Common myeloid progenitor, CD34-positive (primary cell): ENCODE measurements at regions of chr19 and their contacts with region 1.

Region 1: DNA sequence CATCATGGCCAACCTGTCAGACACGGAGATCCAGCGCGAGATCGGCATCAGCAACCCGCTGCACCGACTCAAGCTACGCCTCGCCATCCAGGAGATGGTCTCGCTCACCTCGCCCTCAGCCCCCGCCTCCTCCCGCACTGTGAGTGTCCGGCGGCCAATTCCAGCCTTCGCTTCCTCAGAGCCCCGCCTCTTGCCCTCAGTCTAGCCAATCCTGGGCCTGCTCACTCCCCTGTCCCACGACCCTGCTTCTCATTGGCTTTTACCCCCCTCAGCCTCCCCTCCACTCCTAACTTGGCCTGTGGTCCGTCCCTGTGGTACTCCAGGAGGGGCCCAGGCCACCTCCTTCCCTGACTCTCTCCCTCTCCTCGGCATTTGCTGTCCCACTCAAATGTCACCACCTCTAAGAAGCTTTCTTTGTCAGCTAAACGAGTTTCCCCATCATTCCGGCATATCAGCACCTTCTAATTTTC is 12.3 kb downstream of the HRC start:
- DNase-seq: peak; percentile 84 to 88 (median 88)
- H3K4me3 ChIP-seq: peak overlapping the region; percentile 23 to 84 (median 60)
- H3K27ac ChIP-seq: no peak overlapping the region
- H3K4me1 ChIP-seq: peaks cover 0 to 19% (median 14%) of the 10 kb centered on the region in 4 experiments
- H3K27me3 ChIP-seq: peaks cover 0 to 5% (median 0%) of the 10 kb centered on the region in 5 experiments

Region 2: GRCh38 chr19:49614096-49614833 is 471.4 kb after region 1 on chr19:
- CTCF ChIA-PET with region 1: no interaction called
- POLR2A ChIA-PET with region 1: interaction called, 11 read pairs
- DNase-seq: peak in 2 of 3 donors; percentile 13 to 19
- H3K4me3 ChIP-seq: no peak overlapping the region
- H3K27ac ChIP-seq: peak overlapping the region in 1 of 2 experiments; percentile 14
- H3K4me1 ChIP-seq: no peaks in the 10 kb centered on the region
- H3K27me3 ChIP-seq: no peaks in the 10 kb centered on the region